Left colon (tissue), 2 donors: ENCODE measurements at regions of chr5 and their contacts with region 1.

Region 1: DNA sequence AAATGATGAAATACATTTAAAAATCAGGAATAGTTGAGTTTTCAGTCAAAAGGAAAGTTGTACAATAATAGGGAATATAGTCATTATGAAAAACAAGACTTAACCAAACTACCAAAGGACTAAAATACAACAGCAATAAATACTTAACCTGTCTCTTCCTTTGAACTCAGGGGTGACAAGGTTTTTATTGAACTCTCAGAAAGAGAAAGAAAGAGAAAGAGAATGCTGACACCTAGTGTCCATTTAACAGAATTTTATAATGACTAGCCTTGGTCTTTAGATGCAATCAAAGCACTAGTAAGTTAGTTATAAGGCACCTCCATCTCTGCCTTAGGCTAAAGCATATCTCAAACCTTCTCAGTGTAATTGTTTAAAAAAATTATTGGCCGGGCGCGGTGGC is 47.5 kb downstream of the UIMC1 start:
- DNase-seq: no peak
- ATAC-seq: peak; percentile 73

Region 2: GRCh38 chr5:176660860-176661641 is 298.0 kb before region 1 on chr5:
- intact Hi-C with region 1: loop called in 1 of 2 experiments (anchors 10 kb)
- DNase-seq: peak; percentile 52 to 78
- ATAC-seq: peak; percentile 68

Region 3: GRCh38 chr5:177311723-177312648 is 352.9 kb after region 1 on chr5 and contains the start of gene MXD3:
- intact Hi-C with region 1: no loop called
- DNase-seq: peak; percentile 97 to 98
- ATAC-seq: peak; percentile 87
- total RNA-seq, gene MXD3: 8.3 to 12.9 TPM